ENCODE measurements at regions of chr14 and their contacts with region 1.

Region 1: GRCh38 chr14:36520601-36521525 is 831 bp upstream of the NKX2-1 start:
- DNase-seq: no peak
- ATAC-seq: no peak
- H3K4me3 ChIP-seq: peak overlapping the region; percentile 21 to 57 (median 34)
- H3K27ac ChIP-seq: no peak overlapping the region
- H3K4me1 ChIP-seq: peaks cover 20 to 40% of the 10 kb centered on the region in 2 donors
- H3K27me3 ChIP-seq: peaks cover 96 to 98% (median 98%) of the 10 kb centered on the region in 3 donors
- CTCF ChIP-seq: no peak
- POLR2A ChIP-seq: no peak

Region 2: DNA sequence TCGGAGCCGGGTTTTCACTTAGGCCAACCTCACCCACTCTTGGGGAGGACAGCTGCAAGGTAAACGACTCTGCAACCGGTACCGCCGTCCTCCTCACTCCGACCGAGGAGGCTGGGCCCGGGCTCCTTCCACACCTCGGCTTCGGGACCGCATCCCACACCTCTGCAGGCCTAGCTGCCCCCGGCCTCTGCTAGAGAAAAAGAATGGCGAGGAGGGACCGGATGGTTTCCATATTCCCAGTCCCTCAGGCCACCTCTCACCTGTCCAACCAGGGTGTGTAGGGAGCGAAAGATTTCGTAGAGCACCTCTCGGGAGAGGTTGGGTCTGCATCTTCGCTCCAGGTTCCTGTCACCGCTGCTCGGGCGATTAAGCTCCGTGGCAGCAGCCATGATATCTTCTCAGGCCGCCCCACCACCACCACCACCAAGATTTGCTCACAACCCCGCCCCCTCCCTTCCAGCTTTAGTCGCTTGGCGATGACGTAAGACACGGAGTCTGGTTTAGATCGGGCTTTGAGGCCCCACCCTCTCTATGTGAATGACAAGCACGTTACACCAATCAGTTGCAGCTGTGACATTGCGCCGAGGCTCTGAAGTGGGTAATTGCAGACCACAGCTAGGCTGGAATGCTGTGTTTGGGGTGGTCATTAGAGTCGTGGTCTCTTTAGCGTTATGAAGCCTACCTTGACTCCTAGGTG is 200.5 kb before region 1 on chr14 and contains the start of gene MBIP:
- in situ Hi-C with region 1: no loop called
- intact Hi-C with region 1: loop called (anchors 5 kb)
- DNase-seq: peak; percentile 81 to 90
- ATAC-seq: peak; percentile 99 to 100
- H3K4me3 ChIP-seq: peak within 1 kb of the TSS; percentile 78 to 97 (median 80)
- H3K27ac ChIP-seq: peak within 1 kb of the TSS; percentile 68 to 81 (median 79)
- H3K4me1 ChIP-seq: peaks cover 17 to 19% of the 10 kb centered on the region in 2 donors
- H3K27me3 ChIP-seq: no peaks in the 10 kb centered on the region
- CTCF ChIP-seq: no peak
- POLR2A ChIP-seq: peak in 1 of 2 donors; percentile 19
- total RNA-seq, gene MBIP: 1.8 to 4.6 (median 3.5) TPM

Region 3: GRCh38 chr14:36655963-36656686 is 135.3 kb after region 1 on chr14:
- in situ Hi-C with region 1: no loop called
- intact Hi-C with region 1: loop called (anchors 10 kb)
- DNase-seq: no peak
- ATAC-seq: no peak
- H3K4me3 ChIP-seq: peak overlapping the region in 1 of 4 donors; percentile 48
- H3K27ac ChIP-seq: no peak overlapping the region
- H3K4me1 ChIP-seq: peaks cover 11 to 17% of the 10 kb centered on the region in 2 donors
- H3K27me3 ChIP-seq: peaks cover 97 to 100% (median 100%) of the 10 kb centered on the region in 3 donors
- CTCF ChIP-seq: peak in 2 of 5 experiments; percentile 22 to 43
- POLR2A ChIP-seq: no peak